HEK293 (cell line): ENCODE measurements at regions of chr14 and their contacts with region 1.

Region 1: GRCh38 chr14:93115069-93115820 is 480 bp downstream of the ITPK1 start:
- H3K4me3 ChIP-seq: peak overlapping the region; percentile 77
- H3K27ac ChIP-seq: peak overlapping the region; percentile 92
- H3K4me1 ChIP-seq: peaks cover 17% of the 10 kb centered on the region
- CTCF ChIP-seq: no peak

Region 2: DNA sequence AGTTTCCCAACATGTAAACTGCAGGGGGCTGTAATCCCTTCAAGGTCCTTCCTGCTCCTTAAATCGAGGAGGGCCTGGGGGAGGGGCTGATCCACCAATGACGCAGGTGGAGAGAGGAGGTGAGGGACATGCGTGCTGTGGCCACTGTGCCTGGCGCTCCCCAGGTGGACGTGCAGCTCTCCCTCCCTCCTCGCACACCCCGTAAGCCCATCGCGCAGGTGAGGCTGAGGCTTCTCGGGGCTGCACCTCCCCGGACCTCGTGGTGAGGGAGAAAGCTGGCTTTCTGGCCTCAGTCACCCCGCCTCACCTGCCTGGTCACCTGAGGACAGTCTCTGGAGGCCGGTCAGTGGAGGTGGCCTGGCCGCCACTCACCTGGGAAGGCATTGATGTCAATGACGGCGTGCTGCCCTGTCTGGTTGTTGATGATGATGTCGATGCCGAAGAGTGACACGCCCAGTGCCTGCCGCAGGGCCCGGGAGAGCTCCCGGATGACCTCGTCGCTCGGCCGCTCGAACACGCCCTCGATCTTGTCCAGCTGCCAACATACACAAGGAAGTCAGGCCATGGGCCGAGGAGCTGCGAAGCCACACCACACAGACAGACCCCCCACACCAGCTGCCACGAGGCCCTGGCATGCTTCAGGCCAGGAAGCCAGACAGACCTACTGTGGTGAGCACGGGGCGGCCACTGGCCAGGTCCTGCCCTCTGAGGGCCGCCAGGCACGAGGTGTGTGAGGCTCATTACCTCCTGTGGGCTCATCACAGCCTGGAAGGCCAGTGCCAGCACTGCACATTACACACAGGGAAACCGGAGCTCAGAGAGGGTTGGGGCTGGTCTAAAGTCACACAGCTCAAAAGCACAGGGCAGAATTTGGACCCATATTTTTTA is 169.0 kb before region 1 on chr14:
- CTCF ChIA-PET with region 1: interaction called, 13 read pairs
- POLR2A ChIA-PET with region 1: no interaction called
- H3K4me3 ChIP-seq: no peak overlapping the region
- H3K27ac ChIP-seq: no peak overlapping the region
- H3K4me1 ChIP-seq: no peaks in the 10 kb centered on the region
- CTCF ChIP-seq: no peak

Region 3: GRCh38 chr14:93033983-93034670 is 81.1 kb before region 1 on chr14:
- CTCF ChIA-PET with region 1: interaction called, 10 read pairs
- POLR2A ChIA-PET with region 1: no interaction called
- H3K4me3 ChIP-seq: no peak overlapping the region
- H3K27ac ChIP-seq: no peak overlapping the region
- H3K4me1 ChIP-seq: peaks cover 10% of the 10 kb centered on the region
- CTCF ChIP-seq: peak; percentile 61

Region 4: GRCh38 chr14:93103392-93104080 is 11.7 kb before region 1 on chr14:
- CTCF ChIA-PET with region 1: interaction called, 21 read pairs
- POLR2A ChIA-PET with region 1: interaction called, 6 read pairs
- H3K4me3 ChIP-seq: no peak overlapping the region
- H3K27ac ChIP-seq: no peak overlapping the region
- H3K4me1 ChIP-seq: peaks cover 3% of the 10 kb centered on the region; the same call in 1 of the 2 replicates
- CTCF ChIP-seq: no peak

Region 5: GRCh38 chr14:93132470-93133065 is 17.3 kb after region 1 on chr14:
- CTCF ChIA-PET with region 1: interaction called, 155 read pairs
- POLR2A ChIA-PET with region 1: interaction called, 12 read pairs
- H3K4me3 ChIP-seq: no peak overlapping the region
- H3K27ac ChIP-seq: no peak overlapping the region
- H3K4me1 ChIP-seq: no peaks in the 10 kb centered on the region
- CTCF ChIP-seq: peak; percentile 16; the same call in 1 of the 2 replicates

Region 6: DNA sequence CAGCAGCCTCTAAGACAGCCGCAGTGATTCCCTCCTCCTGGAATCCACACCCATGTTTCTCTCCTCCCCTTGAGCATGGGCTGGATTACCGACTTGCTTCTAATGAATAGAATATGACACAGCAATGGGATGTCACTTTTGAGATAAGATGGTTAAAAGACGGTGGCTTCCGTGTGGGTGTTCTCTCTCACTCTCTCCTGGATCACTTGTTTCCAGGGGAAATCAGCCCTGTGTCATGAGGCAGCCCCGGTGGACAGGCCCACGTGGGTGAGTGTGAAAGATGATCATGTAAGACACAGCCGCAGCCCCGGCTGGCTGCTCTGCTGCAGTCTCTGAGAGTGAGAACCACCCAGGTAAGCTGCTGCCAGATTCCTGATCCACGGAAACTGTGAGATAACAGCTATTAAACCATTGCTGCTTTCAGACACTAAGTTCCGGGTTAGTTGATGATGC is 58.7 kb after region 1 on chr14:
- CTCF ChIA-PET with region 1: interaction called, 17 read pairs
- POLR2A ChIA-PET with region 1: interaction called, 3 read pairs
- H3K4me3 ChIP-seq: no peak overlapping the region
- H3K27ac ChIP-seq: no peak overlapping the region
- H3K4me1 ChIP-seq: peaks cover 3% of the 10 kb centered on the region
- CTCF ChIP-seq: no peak

Region 7: DNA sequence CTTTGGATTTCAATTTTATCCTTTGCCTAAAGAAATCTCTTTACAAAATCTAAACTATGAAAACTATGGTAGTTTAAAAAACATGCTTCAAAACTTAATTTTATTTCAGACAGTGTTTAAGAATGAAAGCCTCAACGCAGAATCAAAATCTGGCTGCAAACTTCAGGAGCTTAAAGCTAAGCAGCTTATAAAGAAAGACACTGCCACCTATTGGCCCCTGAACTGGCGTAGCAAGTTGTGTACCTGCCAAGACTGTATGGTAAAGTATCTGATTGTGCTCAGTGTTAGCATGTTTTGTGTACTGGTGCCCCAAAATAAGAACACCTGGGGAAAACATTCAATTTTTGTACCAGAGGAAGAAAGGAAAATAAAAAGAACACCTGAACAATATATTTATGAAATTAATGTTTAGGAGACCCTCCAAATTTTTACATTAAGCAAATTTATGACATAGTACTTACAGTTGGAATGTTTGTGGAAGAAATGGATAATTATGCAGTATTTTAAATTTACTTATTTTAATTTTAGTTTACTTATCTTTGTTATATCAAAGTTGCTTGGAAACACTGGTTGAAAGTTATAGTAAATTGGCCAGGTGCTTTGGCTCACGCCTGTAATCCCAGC is 104.0 kb after region 1 on chr14:
- CTCF ChIA-PET with region 1: interaction called, 13 read pairs
- POLR2A ChIA-PET with region 1: no interaction called
- H3K4me3 ChIP-seq: no peak overlapping the region
- H3K27ac ChIP-seq: no peak overlapping the region
- H3K4me1 ChIP-seq: no peaks in the 10 kb centered on the region
- CTCF ChIP-seq: no peak; the same call in 1 of the 2 replicates